HEK293 (cell line): ENCODE measurements at regions of chr11 and their contacts with region 1.

Region 1: GRCh38 chr11:45771566-45772448 is 33.1 kb upstream of the SLC35C1 start:
- H3K4me3 ChIP-seq: peak overlapping the region; percentile 39
- H3K27ac ChIP-seq: no peak overlapping the region
- H3K4me1 ChIP-seq: no peaks in the 10 kb centered on the region
- CTCF ChIP-seq: peak; percentile 79

Region 2: GRCh38 chr11:45339729-45340519 is 431.9 kb before region 1 on chr11:
- CTCF ChIA-PET with region 1: interaction called, 34 read pairs
- POLR2A ChIA-PET with region 1: no interaction called
- H3K4me3 ChIP-seq: no peak overlapping the region
- H3K27ac ChIP-seq: no peak overlapping the region
- H3K4me1 ChIP-seq: no peaks in the 10 kb centered on the region
- CTCF ChIP-seq: peak; percentile 82

Region 3: GRCh38 chr11:45365961-45366618 is 405.7 kb before region 1 on chr11:
- CTCF ChIA-PET with region 1: interaction called, 97 read pairs
- POLR2A ChIA-PET with region 1: no interaction called
- H3K4me3 ChIP-seq: no peak overlapping the region
- H3K27ac ChIP-seq: no peak overlapping the region
- H3K4me1 ChIP-seq: no peaks in the 10 kb centered on the region
- CTCF ChIP-seq: no peak

Region 4: DNA sequence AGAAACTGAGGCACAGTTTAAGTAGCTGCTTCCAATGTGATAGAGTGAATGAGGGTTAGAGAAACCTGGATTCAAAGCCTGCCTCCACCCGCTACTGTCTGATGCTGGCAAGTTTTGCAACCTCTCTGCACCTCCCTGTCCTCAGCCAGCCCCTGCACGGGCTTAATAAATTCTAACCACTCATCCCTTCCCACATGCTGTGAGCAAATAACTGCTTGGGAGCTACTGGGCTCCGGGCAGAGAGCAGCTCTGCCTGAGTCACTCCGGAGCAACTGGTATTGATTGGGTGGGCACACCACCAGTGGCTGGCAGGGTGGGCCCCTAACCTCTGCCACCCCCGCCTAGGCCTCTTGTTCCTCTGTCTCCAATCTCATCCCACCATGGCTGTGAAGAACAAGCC is 381.4 kb before region 1 on chr11:
- CTCF ChIA-PET with region 1: interaction called, 11 read pairs
- POLR2A ChIA-PET with region 1: no interaction called
- H3K4me3 ChIP-seq: no peak overlapping the region
- H3K27ac ChIP-seq: no peak overlapping the region
- H3K4me1 ChIP-seq: no peaks in the 10 kb centered on the region
- CTCF ChIP-seq: no peak

Region 5: GRCh38 chr11:45665206-45665932 is 106.4 kb before region 1 on chr11 and contains the start of gene CHST1:
- CTCF ChIA-PET with region 1: interaction called, 13 read pairs
- POLR2A ChIA-PET with region 1: no interaction called
- H3K4me3 ChIP-seq: peak within 1 kb of the TSS; percentile 40
- H3K27ac ChIP-seq: no peak within 1 kb of the TSS; the same call in 1 of the 2 replicates
- H3K4me1 ChIP-seq: no peaks in the 10 kb centered on the region
- CTCF ChIP-seq: no peak

Region 6: DNA sequence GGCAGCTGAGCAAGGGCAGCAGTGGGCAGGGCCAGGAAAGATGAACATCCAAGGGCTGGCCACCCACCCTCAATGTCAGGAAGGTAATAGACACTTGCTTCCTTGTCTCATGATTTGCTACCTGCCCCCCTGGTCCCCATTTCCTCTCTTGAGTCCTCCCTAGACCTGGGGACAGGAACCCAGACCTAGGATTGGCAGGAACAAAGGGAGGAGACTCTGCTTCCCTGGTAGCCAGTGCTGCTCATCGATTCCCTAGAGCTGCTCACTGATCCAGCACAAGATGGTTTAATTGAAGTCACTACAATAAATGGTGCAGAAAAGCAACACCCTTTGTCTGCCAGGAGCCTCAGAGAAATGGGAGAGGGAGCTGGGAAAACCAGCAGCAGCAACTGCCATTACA is 38.6 kb before region 1 on chr11:
- CTCF ChIA-PET with region 1: no interaction called
- POLR2A ChIA-PET with region 1: no interaction called
- H3K4me3 ChIP-seq: no peak overlapping the region
- H3K27ac ChIP-seq: no peak overlapping the region
- H3K4me1 ChIP-seq: no peaks in the 10 kb centered on the region
- CTCF ChIP-seq: no peak